ENCODE measurements at regions of chrX and their contacts with region 1.

Region 1: GRCh38 chrX:151753313-151754041 is 18.9 kb downstream of the CNGA2 start:
- DNase-seq: peak; percentile 41
- H3K4me3 ChIP-seq: no peak overlapping the region
- H3K27ac ChIP-seq: no peak overlapping the region
- H3K4me1 ChIP-seq: peaks cover 6% of the 10 kb centered on the region
- H3K27me3 ChIP-seq: no peaks in the 10 kb centered on the region
- CTCF ChIP-seq: peak; percentile 71 to 88

Region 2: DNA sequence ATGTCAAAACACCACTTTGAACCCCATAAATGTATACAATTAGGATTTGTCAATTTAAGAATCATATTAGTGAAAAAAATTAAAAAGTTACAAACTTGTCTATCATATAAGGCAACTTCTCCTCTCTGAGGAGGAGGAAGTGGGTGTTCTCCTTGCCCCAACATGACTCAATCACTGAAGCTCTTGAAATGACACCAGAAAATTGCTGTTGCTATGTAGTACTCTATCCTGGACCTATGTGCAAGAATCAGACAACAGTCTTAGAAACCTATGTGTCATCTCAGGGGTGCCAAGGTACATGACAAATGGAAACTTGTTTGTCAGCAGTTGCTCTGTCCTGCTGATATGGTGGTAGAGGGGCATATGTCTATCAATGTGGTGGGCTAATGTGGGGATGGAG is 722.6 kb before region 1 on chrX:
- CTCF ChIA-PET with region 1: no interaction called
- dilution Hi-C with region 1: no loop called
- in situ Hi-C with region 1: no loop called
- intact Hi-C with region 1: no loop called
- DNase-seq: no peak
- H3K4me3 ChIP-seq: no peak overlapping the region
- H3K27ac ChIP-seq: no peak overlapping the region
- H3K4me1 ChIP-seq: no peaks in the 10 kb centered on the region
- H3K27me3 ChIP-seq: no peaks in the 10 kb centered on the region
- CTCF ChIP-seq: no peak

Region 3: GRCh38 chrX:151151665-151152267 is 601.7 kb before region 1 on chrX:
- CTCF ChIA-PET with region 1: no interaction called
- dilution Hi-C with region 1: no loop called
- in situ Hi-C with region 1: no loop called
- intact Hi-C with region 1: loop called (anchors 5 kb)
- DNase-seq: peak; percentile 31
- H3K4me3 ChIP-seq: no peak overlapping the region
- H3K27ac ChIP-seq: no peak overlapping the region
- H3K4me1 ChIP-seq: no peaks in the 10 kb centered on the region
- H3K27me3 ChIP-seq: peaks cover 3% of the 10 kb centered on the region
- CTCF ChIP-seq: peak; percentile 52 to 69

Region 4: DNA sequence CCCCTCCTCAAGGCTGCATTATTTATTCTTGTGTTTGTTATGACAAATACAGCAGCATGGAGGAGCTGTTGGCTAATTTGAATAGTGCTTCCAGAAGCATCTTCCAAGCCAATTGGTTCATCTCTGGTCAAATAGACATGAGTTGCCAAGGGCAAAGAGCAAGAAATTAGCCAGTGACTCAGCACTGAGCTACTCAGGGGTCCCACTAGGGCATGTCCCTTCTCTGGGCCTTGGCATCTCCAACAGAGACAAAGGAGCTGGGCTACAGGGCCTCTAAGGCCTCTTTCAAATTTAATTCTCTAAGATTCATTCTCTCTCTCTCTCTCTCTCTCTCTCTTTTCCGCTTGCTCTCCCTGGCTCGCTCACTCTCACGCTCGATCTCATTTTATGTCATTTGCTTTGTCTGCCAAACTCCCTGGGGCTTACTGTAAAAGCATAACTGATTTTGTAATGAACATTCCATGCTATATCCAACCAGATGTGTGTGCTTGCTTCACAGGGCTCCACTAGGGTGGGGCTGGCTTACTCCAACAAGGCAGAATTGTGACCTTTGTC is 72.5 kb after region 1 on chrX:
- CTCF ChIA-PET with region 1: no interaction called
- dilution Hi-C with region 1: no loop called
- in situ Hi-C with region 1: no loop called
- intact Hi-C with region 1: loop called (anchors 2 kb)
- DNase-seq: peak; percentile 59
- H3K4me3 ChIP-seq: no peak overlapping the region
- H3K27ac ChIP-seq: no peak overlapping the region
- H3K4me1 ChIP-seq: peaks cover 24% of the 10 kb centered on the region
- H3K27me3 ChIP-seq: no peaks in the 10 kb centered on the region
- CTCF ChIP-seq: peak; percentile 15 to 52

Region 5: GRCh38 chrX:151974336-151975227 is 221.1 kb after region 1 on chrX and contains the start of gene GABRE:
- CTCF ChIA-PET with region 1: interaction called, 4 read pairs
- dilution Hi-C with region 1: no loop called
- in situ Hi-C with region 1: no loop called
- intact Hi-C with region 1: loop called (anchors 1 kb)
- DNase-seq: no peak
- H3K4me3 ChIP-seq: peak within 1 kb of the TSS; percentile 44 to 62 (median 50)
- H3K27ac ChIP-seq: peak within 1 kb of the TSS; percentile 14
- H3K4me1 ChIP-seq: peaks cover 18% of the 10 kb centered on the region
- H3K27me3 ChIP-seq: no peaks in the 10 kb centered on the region
- CTCF ChIP-seq: no peak
- total RNA-seq, gene GABRE: 26.5 to 32.2 TPM

Region 6: DNA sequence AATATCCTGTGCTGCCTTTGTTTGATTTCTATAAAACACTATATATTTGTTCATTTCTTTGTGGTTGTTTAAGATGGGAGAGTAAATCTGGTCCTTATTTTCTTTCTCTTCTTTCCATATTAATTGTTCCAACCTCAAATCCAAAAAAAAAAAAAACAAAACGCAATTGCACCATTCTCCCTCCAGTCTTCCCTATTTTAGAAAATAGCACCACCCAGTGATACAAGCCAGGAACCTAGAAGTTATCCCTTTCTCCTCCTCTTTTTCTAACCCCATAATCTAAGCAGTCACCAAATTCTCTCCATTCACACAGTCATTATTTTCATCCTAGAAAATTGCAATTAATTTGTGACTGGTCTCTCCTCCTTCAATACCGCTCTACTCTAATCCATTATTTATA is 589.8 kb after region 1 on chrX:
- CTCF ChIA-PET with region 1: no interaction called
- dilution Hi-C with region 1: no loop called
- in situ Hi-C with region 1: no loop called
- intact Hi-C with region 1: loop called (anchors 1 kb)
- DNase-seq: no peak
- H3K4me3 ChIP-seq: no peak overlapping the region
- H3K27ac ChIP-seq: no peak overlapping the region
- H3K4me1 ChIP-seq: no peaks in the 10 kb centered on the region
- H3K27me3 ChIP-seq: no peaks in the 10 kb centered on the region
- CTCF ChIP-seq: peak in 1 of 2 donors; percentile 41

Region 7: DNA sequence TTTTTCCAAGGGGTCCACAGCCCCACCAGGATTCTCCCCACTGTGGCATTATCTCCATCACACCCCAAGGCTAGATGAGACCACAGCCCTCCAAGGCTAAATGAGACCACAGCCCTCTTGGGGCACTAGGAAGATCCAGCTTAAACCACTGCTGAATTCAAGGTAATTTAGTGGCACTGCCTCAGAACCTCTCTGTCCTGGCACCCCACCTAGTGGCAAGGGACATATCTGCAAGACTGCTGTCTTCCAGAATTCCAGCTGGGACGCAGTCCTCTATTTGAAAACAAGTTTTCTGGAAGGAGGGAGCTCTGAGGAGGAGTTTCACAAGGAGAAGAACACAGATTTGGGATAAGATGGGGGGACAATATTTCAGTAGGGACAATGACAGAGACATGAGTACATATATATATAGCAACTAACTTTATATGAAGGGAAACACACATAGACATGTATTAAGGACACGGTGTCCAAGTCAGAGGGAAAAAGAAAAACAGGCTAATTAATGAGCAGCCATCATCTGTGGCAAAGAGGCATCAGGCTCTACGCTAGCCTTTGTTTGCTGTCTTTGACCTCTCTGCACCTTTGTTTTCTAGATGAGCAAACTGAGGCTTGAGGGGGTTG is 1067.8 kb after region 1 on chrX:
- CTCF ChIA-PET with region 1: no interaction called
- dilution Hi-C with region 1: no loop called
- in situ Hi-C with region 1: loop called (anchors 25 kb)
- intact Hi-C with region 1: loop called (anchors 1 kb)
- DNase-seq: peak; percentile 13
- H3K4me3 ChIP-seq: no peak overlapping the region
- H3K27ac ChIP-seq: no peak overlapping the region
- H3K4me1 ChIP-seq: peaks cover 5% of the 10 kb centered on the region
- H3K27me3 ChIP-seq: no peaks in the 10 kb centered on the region
- CTCF ChIP-seq: peak; percentile 56 to 71

Measured in mammary epithelial cell (primary cell).